ENCODE measurements at regions of chr19 and their contacts with region 1.

Region 1: DNA sequence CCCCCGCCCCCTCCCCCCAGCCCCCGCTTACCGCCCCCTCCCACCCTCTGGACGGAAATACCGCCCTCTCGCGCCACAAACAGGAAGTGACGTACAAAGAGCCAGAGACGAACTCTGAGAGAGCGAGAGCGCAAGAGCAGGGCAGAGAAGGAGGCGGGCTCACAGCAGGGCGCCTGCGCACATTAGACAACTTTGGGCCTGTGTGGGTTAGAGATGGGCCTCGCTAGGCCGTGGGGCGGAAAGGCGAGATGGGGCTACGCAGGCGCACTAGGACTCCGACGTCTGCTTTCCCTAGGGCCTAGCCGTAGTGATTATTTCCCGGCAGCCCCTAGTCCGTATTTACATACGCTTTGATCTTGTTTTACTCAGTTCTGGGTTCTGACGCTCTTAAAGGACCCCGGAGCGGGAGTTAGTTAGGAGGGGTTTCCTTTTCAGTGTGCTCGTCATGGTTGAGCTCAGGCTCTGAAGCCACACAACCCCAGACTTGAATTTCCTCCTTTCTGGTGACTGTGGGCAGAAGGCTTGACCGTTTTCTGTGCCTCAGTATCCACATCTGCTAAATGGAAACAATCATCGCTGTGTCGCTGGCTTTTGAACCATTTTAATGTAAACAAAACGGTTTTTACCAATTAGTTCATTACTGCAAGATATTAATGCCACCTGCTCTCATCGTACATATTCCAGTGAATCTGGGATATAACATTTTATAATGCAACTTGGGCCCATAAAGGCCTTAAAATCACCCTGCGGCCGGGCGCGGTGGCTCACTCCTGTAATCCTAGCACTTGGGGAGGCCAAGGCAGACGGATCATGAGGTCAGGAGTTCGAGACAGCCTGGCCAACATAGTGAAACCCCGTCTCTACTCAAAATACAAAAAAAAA is 449 bp upstream of the AKT2 start:
- DNase-seq: peak; percentile 99
- H3K4me3 Mint-ChIP-seq: peak overlapping the region; percentile 85
- H3K27ac Mint-ChIP-seq: peak overlapping the region; percentile 99
- H3K4me1 Mint-ChIP-seq: peaks cover 28% of the 10 kb centered on the region
- H3K27me3 Mint-ChIP-seq: no peaks in the 10 kb centered on the region

Region 2: DNA sequence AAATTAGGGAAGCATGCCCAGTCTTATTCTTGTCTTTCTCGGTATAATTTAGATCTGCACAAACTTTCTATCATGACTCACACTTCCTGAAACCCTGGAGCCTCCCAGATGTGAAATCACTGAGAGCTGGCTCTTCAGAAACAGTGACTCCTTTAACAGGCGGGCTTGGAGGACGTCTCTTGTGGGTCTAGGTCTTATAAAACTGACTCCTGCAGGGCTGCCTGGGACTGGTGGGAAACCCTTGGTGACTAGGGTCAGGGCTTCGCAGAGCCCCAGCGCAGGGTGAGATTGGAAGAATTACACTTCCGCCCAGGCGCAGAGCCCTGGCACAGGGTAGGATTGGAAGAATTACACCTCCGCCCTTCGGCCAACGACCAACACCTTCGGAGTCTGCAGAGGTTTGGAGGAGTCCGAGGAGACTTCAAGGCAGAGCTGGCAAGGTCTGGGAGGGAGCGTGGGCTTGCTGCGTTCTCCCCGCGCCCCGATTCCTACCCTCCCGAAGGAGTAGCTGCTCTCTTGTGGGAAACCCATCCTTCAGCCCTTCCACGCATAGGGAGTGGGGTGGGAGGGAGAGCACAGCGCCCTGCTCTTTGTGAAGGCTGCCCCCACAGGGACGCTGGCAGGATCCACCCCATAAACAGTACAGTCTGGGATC is 137.8 kb before region 1 on chr19:
- intact Hi-C with region 1: no loop called
- DNase-seq: no peak
- H3K4me3 Mint-ChIP-seq: no peak overlapping the region
- H3K27ac Mint-ChIP-seq: no peak overlapping the region
- H3K4me1 Mint-ChIP-seq: peaks cover 17% of the 10 kb centered on the region
- H3K27me3 Mint-ChIP-seq: no peaks in the 10 kb centered on the region

Region 3: DNA sequence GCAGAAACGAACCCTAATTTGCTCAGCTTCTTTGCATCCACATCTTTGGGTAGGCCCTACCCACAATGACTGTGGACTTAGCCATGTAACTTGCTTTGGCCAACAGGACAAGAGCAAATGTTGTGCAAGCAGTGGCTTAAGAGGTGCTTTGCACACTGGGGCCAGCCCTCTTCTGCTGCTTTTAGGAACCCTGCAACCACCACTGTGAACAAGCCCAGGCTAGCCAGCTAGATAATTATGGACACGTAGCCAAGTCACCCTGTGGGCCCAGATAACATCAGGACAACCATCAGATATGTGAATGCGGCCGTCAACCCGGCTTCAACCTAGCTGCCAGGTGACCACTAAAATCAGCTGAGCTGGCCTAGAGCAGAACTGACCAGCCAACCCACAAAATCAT is 45.5 kb after region 1 on chr19:
- intact Hi-C with region 1: no loop called
- DNase-seq: no peak
- H3K4me3 Mint-ChIP-seq: no peak overlapping the region
- H3K27ac Mint-ChIP-seq: no peak overlapping the region
- H3K4me1 Mint-ChIP-seq: no peaks in the 10 kb centered on the region
- H3K27me3 Mint-ChIP-seq: no peaks in the 10 kb centered on the region

Region 4: GRCh38 chr19:40425450-40426287 is 140.1 kb after region 1 on chr19 and contains the start of gene SERTAD1:
- intact Hi-C with region 1: loop called (anchors 1 kb)
- DNase-seq: peak; percentile 100
- H3K4me3 Mint-ChIP-seq: peak within 1 kb of the TSS; percentile 97
- H3K27ac Mint-ChIP-seq: peak within 1 kb of the TSS; percentile 96
- H3K4me1 Mint-ChIP-seq: peaks cover 18% of the 10 kb centered on the region
- H3K27me3 Mint-ChIP-seq: no peaks in the 10 kb centered on the region
- total RNA-seq, gene SERTAD1: 17.5 and 18.1 TPM in 2 replicates

Region 5: DNA sequence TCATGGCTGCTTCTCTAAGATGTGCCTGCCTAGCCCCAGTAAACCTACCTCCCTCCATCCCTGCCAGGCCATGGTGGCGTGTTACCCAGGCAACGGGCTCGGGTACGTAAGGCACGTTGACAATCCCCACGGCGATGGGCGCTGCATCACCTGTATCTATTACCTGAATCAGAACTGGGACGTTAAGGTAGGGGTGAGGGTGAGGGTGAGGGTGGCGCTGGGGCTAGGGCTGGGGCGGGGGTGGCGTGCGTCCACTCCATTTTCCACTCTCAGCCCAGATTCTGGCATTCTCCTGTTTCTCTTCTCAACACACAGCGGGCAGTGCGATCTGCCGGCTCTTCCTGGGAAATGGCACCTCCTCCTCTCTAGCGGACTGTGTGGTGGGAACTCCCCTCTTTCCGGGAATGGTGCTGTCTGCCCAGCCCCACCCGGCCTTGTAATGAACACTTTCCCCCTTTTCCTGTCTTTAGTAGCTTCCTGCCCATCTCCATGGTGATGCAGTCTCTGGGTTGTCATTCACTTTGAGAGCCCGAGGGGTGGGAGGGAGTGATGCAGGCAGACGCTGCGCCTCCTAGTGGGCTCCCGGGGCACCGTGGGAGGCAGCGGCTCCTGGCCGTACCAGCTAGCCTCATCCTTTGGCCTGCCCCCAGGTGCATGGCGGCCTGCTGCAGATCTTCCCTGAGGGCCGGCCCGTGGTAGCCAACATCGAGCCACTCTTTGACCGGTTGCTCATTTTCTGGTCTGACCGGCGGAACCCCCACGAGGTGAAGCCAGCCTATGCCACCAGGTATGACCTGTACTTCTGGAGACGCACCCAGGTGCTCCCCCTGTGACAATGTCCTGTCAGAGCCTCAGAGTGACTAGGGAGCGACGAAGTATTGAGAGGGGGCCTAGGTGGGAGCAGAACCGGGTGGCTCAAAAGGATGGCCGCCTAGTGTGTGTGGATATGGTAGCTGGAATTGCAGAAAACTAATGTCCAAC is 521.2 kb after region 1 on chr19:
- intact Hi-C with region 1: loop called (anchors 10 kb)
- DNase-seq: peak; percentile 71
- H3K4me3 Mint-ChIP-seq: peak overlapping the region; percentile 63
- H3K27ac Mint-ChIP-seq: peak overlapping the region; percentile 83
- H3K4me1 Mint-ChIP-seq: peaks cover 76% of the 10 kb centered on the region
- H3K27me3 Mint-ChIP-seq: no peaks in the 10 kb centered on the region

Measured in activated T-helper 2 cell treated with anti-CD3 and anti-CD28 coated beads, Interferon-gamma antibody, Interleukin-2, Interleukin-4, amounts not matched to agents 10 μg/mL and 5 μg/mL and 100 μg/mL, durations not matched to agents 14 hours and 24 hours and 36 hours (primary cell).